GM12878 (cell line): ENCODE measurements at regions of chr11 and their contacts with region 1.

Region 1: GRCh38 chr11:65911682-65912568 is 6.9 kb downstream of the C11orf68 start:
- DNase-seq: no peak
- ATAC-seq: peak; percentile 63
- H3K4me3 ChIP-seq: no peak overlapping the region
- H3K27ac ChIP-seq: peak overlapping the region; percentile 38; the same call in 1 of the 2 replicates
- H3K4me1 ChIP-seq: peaks cover 32% of the 10 kb centered on the region
- H3K27me3 ChIP-seq: no peaks in the 10 kb centered on the region
- CTCF ChIP-seq: peak in 2 of 3 experiments; percentile 26 to 37; a peak in 3 of 6 replicates
- EP300 ChIP-seq: no peak
- POLR2A ChIP-seq: no peak
- RAD21 ChIP-seq: no peak

Region 2: DNA sequence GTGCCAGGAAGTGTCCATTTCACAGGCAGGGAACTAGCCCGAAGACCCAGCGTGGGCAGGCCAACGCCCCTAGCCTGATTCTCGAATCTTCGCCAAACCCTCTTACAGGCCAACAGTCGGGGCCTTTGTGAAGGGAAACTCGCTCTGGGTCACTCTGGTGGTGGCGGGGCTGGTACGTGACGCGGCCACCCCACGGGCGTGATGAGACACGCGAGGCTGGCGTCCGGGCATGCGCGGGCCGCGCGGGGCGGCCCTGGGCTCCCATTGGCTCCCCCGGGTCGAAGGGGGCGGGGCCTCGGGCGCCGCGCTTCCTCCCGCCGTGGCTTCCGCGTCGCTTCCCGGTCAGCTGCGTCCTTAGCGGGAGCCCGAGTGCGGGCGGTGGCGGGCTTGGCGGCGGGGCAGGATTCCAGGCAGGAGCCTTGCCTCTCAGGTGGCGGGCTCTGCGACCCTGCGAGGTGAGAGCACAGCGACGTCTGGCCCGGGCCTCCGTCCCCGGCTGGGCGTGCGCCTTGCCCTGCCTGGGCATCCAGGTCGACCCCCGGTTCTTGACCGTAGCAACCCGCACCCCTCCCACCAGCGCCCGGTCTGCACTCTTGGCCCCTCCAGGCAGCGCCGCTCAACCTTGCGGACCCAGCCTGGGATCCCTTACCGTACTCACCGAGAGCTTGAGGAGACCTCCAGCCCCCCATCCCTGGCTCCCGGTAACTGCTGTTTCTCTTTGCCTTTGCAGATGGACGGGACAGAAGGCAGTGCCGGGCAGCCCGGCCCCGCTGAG is 525.4 kb before region 1 on chr11 and contains the start of gene FRMD8:
- CTCF ChIA-PET with region 1: no interaction called
- POLR2A ChIA-PET with region 1: no interaction called
- RAD21 ChIA-PET with region 1: no interaction called
- SMC1A ChIA-PET with region 1: no interaction called
- in situ Hi-C with region 1: no loop called
- intact Hi-C with region 1: no loop called
- DNase-seq: no peak
- ATAC-seq: peak; percentile 65
- H3K4me3 ChIP-seq: peak within 1 kb of the TSS; percentile 81
- H3K27ac ChIP-seq: peak within 1 kb of the TSS; percentile 95
- H3K4me1 ChIP-seq: peaks cover 60% of the 10 kb centered on the region
- H3K27me3 ChIP-seq: no peaks in the 10 kb centered on the region
- CTCF ChIP-seq: no peak
- EP300 ChIP-seq: no peak
- POLR2A ChIP-seq: peak; percentile 93
- RAD21 ChIP-seq: no peak
- polyA plus RNA-seq, gene FRMD8: 8.3 TPM

Region 3: GRCh38 chr11:65425105-65425970 is 486.6 kb before region 1 on chr11:
- CTCF ChIA-PET with region 1: no interaction called
- POLR2A ChIA-PET with region 1: no interaction called
- RAD21 ChIA-PET with region 1: no interaction called
- SMC1A ChIA-PET with region 1: no interaction called
- in situ Hi-C with region 1: no loop called
- intact Hi-C with region 1: no loop called
- DNase-seq: no peak
- ATAC-seq: peak; percentile 9
- H3K4me3 ChIP-seq: peak overlapping the region; percentile 95
- H3K27ac ChIP-seq: peak overlapping the region; percentile 100
- H3K4me1 ChIP-seq: peaks cover 31% of the 10 kb centered on the region
- H3K27me3 ChIP-seq: no peaks in the 10 kb centered on the region
- CTCF ChIP-seq: peak in 1 of 3 experiments; percentile 10; a peak in 1 of 6 replicates
- EP300 ChIP-seq: peak in 1 of 2 experiments; percentile 29; a peak in 2 of 4 replicates
- POLR2A ChIP-seq: peak; percentile 83
- RAD21 ChIP-seq: no peak

Region 4: DNA sequence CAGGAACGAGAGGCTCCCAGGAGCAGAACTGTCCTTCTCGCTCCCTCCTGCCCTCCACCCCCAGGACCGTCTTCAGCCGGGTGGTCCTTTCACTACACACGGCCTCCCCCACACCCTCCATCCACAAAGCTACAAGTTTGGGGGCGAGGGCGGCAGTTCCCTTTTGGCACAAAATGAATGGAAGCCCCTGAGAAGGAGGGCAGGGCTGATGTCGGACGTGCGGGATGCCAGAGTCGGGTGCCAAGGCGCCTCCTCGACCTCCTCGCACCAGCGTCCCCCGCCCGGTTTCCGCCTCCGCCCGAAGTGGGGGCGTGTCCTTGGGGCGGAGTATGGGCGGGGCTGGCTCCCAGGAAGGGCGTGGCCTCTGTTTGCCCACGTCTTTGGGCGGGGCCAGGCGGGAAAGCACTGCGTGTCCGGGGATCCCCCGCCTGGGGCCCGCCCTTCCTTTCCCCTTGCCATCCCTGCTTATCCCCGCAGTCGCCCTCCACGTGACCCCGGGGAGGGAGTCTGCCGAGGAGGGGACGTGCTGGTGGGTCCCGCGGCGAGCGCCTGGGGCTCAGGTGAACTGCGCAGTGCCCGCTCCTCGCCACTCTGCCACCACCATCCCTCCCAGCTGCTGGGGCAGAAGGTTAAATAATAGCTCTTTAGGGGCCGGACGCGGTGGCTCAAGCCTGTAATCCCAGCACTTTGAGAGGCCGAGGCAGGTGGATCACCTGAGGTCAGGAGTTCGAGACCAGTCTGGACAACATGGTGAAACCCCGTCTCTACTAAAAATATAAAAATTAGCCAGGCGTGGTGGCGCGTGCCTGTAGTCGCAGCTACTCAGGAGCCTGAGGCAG is 38.4 kb before region 1 on chr11:
- CTCF ChIA-PET with region 1: no interaction called
- POLR2A ChIA-PET with region 1: no interaction called
- RAD21 ChIA-PET with region 1: no interaction called
- SMC1A ChIA-PET with region 1: no interaction called
- in situ Hi-C with region 1: no loop called
- intact Hi-C with region 1: no loop called
- DNase-seq: peak; percentile 87
- ATAC-seq: peak; percentile 89
- H3K4me3 ChIP-seq: peak overlapping the region; percentile 87
- H3K27ac ChIP-seq: peak overlapping the region; percentile 51
- H3K4me1 ChIP-seq: peaks cover 11% of the 10 kb centered on the region
- H3K27me3 ChIP-seq: no peaks in the 10 kb centered on the region
- CTCF ChIP-seq: no peak
- EP300 ChIP-seq: no peak
- POLR2A ChIP-seq: peak; percentile 83
- RAD21 ChIP-seq: no peak

Region 5: DNA sequence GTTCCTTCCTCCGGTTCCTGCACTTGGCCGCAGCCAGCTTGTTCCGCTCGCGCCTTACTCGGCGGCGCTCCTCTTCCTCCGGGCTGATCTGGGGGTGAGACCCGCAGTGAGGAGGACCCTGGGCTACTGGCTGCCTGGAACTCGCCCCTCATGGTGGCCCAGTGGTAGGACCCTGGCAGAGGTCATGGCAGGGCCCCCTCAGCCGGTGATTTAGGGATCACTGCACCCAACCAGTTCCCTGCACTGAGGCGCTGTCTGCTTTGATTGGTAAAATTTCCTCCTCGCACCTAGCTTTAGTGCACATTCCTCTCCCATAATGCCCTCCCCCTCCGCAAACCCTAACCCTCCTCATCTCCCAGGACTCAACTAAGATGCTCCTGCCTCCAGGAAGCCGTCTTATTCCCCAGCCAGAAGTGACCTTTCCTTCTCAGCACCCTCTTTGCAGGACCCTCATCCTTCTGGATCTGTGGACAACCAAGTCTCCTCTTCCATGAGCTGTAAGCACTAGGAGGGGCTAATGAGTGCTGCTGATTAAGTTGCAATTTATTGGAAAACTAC is 17.8 kb before region 1 on chr11:
- CTCF ChIA-PET with region 1: interaction called, 89 read pairs
- POLR2A ChIA-PET with region 1: interaction called, 34 read pairs
- RAD21 ChIA-PET with region 1: interaction called, 18 read pairs
- SMC1A ChIA-PET with region 1: interaction called, 24 read pairs
- in situ Hi-C with region 1: no loop called
- intact Hi-C with region 1: no loop called
- DNase-seq: no peak
- ATAC-seq: peak; percentile 29
- H3K4me3 ChIP-seq: peak overlapping the region; percentile 98
- H3K27ac ChIP-seq: peak overlapping the region; percentile 86
- H3K4me1 ChIP-seq: peaks cover 27% of the 10 kb centered on the region
- H3K27me3 ChIP-seq: no peaks in the 10 kb centered on the region
- CTCF ChIP-seq: no peak
- EP300 ChIP-seq: no peak
- POLR2A ChIP-seq: peak; percentile 83
- RAD21 ChIP-seq: no peak

Region 6: GRCh38 chr11:65900125-65900898 is 11.6 kb before region 1 on chr11 and contains the start of gene FOSL1:
- CTCF ChIA-PET with region 1: interaction called, 11 read pairs
- POLR2A ChIA-PET with region 1: interaction called, 15 read pairs
- RAD21 ChIA-PET with region 1: interaction called, 7 read pairs
- SMC1A ChIA-PET with region 1: interaction called, 6 read pairs
- in situ Hi-C with region 1: no loop called
- intact Hi-C with region 1: no loop called
- DNase-seq: peak; percentile 57
- ATAC-seq: peak; percentile 89
- H3K4me3 ChIP-seq: peak within 1 kb of the TSS; percentile 84
- H3K27ac ChIP-seq: peak within 1 kb of the TSS; percentile 9; the same call in 1 of the 2 replicates
- H3K4me1 ChIP-seq: 0 out of 2 replicates have a peak, but pooled peaks cover 6% of the 10 kb centered on the region
- H3K27me3 ChIP-seq: no peaks in the 10 kb centered on the region; a peak in 1 of 4 replicates
- CTCF ChIP-seq: no peak
- EP300 ChIP-seq: 0 out of 4 replicates have a peak, but pooled peaks of 1 of the 2 experiments have one; percentile 8
- POLR2A ChIP-seq: peak; percentile 73
- RAD21 ChIP-seq: no peak
- polyA plus RNA-seq, gene FOSL1: 0.82 to 0.90 TPM